ENCODE measurements at regions of chr2 and their contacts with region 1.

Region 1: DNA sequence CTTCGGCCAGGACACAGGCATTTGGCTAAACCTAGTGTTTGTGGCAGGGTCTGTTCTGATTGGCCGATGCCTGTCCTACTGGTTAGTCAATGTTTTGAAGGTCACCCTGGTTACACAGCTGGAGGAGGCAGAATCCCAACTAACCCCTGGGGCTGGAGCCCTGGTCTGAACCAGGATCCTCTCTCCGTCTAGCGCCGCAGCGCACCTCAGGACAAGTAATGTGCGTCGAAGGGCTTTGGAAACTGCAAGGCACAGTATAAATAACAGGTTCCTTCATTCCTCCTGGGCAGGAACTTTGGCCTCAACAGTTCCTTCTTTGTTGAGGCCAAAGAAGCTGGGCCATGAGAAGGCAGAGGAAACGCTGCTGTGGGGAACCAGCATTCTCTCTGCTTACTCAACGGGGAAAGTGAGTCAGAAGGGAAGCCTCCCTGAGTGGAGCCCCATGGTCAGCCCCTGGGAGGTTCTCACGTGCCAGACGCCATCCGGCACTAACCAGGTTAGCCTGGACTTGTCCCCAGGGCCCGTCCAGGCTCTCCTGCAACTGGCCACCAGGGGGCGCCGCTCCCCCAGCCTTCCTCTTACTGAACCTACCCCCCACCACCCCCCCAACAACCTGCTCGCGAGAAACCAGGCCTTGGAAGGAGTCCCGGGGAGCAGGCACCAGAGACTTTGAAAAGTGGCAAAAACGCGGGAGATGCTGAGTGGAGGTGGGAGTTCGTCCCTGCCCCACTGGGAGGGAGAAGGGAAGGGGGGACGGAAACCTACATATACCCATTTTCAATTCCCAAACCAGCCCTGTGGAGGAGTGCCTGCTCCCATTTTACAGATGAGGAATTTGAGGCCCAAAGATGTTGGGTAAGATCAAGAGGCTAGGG is 19.8 kb downstream of the TEX44 start:
- DNase-seq: peak; percentile 99
- H3K4me3 Mint-ChIP-seq: peak overlapping the region; percentile 81
- H3K27ac Mint-ChIP-seq: peak overlapping the region; percentile 98
- H3K4me1 Mint-ChIP-seq: peaks cover 46% of the 10 kb centered on the region
- H3K27me3 Mint-ChIP-seq: no peaks in the 10 kb centered on the region

Region 2: GRCh38 chr2:231455222-231455621 is 157.2 kb before region 1 on chr2:
- CTCF ChIA-PET with region 1: no interaction called
- intact Hi-C with region 1: no loop called
- DNase-seq: no peak
- H3K4me3 Mint-ChIP-seq: no peak overlapping the region
- H3K27ac Mint-ChIP-seq: peak overlapping the region; percentile 1
- H3K4me1 Mint-ChIP-seq: peaks cover 31% of the 10 kb centered on the region
- H3K27me3 Mint-ChIP-seq: no peaks in the 10 kb centered on the region

Region 3: GRCh38 chr2:231514103-231514950 is 98.1 kb before region 1 on chr2:
- CTCF ChIA-PET with region 1: interaction called, 8 read pairs
- intact Hi-C with region 1: loop called (anchors 1 kb)
- DNase-seq: peak; percentile 99
- H3K4me3 Mint-ChIP-seq: peak overlapping the region; percentile 95
- H3K27ac Mint-ChIP-seq: peak overlapping the region; percentile 92
- H3K4me1 Mint-ChIP-seq: peaks cover 13% of the 10 kb centered on the region
- H3K27me3 Mint-ChIP-seq: no peaks in the 10 kb centered on the region

Region 4: GRCh38 chr2:231642631-231643494 is 30.4 kb after region 1 on chr2:
- CTCF ChIA-PET with region 1: interaction called, 6 read pairs
- intact Hi-C with region 1: loop called (anchors 1 kb)
- DNase-seq: peak; percentile 89
- H3K4me3 Mint-ChIP-seq: peak overlapping the region; percentile 62
- H3K27ac Mint-ChIP-seq: peak overlapping the region; percentile 57
- H3K4me1 Mint-ChIP-seq: peaks cover 18% of the 10 kb centered on the region
- H3K27me3 Mint-ChIP-seq: no peaks in the 10 kb centered on the region

Region 5: GRCh38 chr2:231662028-231662810 is 49.8 kb after region 1 on chr2:
- CTCF ChIA-PET with region 1: interaction called, 13 read pairs
- intact Hi-C with region 1: loop called (anchors 1 kb)
- DNase-seq: peak; percentile 96
- H3K4me3 Mint-ChIP-seq: peak overlapping the region; percentile 74
- H3K27ac Mint-ChIP-seq: peak overlapping the region; percentile 92
- H3K4me1 Mint-ChIP-seq: peaks cover 17% of the 10 kb centered on the region
- H3K27me3 Mint-ChIP-seq: no peaks in the 10 kb centered on the region

Region 6: DNA sequence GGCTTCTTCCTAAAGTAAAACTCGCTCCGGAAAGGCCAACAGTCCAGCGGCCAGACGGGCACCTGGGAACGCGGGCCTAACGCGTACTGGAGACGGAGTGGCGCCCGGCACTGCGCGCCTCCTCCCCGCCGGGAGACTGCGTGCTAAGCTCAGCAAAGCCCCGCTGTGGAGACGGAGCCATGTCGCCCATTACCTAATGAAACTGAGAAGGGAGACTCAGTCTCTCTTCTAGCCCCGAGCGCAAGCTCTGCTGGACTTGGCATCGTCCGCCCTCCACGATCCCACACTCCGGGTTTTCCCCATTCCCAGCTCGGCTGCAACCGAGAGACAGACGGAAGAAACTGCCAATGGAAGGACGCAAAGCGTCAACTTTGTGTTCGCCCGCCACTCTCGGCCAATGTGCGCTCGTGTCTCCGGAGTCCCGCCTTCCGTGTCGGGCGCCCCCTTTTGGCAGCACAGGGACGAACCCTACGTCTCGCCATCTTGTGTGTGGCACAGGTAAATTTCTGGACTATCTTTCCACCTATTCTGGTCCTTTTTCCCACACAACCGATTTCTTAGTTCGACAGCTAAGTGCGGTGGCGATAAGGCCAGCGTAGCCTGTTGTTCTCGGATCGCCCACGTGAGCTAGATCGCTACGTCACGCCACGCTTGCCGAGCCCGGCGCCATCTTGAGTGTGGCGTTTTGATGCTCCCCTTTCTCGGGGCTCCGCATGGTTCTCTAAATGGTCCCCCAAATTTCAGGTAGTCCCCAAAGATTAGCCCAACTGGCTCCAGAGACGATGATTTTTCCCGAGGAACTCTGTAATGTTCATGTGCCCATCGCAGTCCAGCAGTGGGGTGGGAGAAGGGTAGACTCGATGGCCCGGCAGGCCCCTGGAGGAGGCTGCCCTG is 94.6 kb after region 1 on chr2:
- CTCF ChIA-PET with region 1: interaction called, 134 read pairs
- intact Hi-C with region 1: loop called (anchors 1 kb)
- DNase-seq: peak; percentile 98
- H3K4me3 Mint-ChIP-seq: peak overlapping the region; percentile 91
- H3K27ac Mint-ChIP-seq: peak overlapping the region; percentile 100
- H3K4me1 Mint-ChIP-seq: peaks cover 18% of the 10 kb centered on the region
- H3K27me3 Mint-ChIP-seq: peaks cover 2% of the 10 kb centered on the region

Region 7: GRCh38 chr2:231726228-231726627 is 113.8 kb after region 1 on chr2:
- CTCF ChIA-PET with region 1: interaction called, 11 read pairs
- intact Hi-C with region 1: no loop called
- DNase-seq: no peak
- H3K4me3 Mint-ChIP-seq: no peak overlapping the region
- H3K27ac Mint-ChIP-seq: no peak overlapping the region
- H3K4me1 Mint-ChIP-seq: no peaks in the 10 kb centered on the region
- H3K27me3 Mint-ChIP-seq: no peaks in the 10 kb centered on the region